ENCODE measurements at regions of chr1 and their contacts with region 1.

Region 1: DNA sequence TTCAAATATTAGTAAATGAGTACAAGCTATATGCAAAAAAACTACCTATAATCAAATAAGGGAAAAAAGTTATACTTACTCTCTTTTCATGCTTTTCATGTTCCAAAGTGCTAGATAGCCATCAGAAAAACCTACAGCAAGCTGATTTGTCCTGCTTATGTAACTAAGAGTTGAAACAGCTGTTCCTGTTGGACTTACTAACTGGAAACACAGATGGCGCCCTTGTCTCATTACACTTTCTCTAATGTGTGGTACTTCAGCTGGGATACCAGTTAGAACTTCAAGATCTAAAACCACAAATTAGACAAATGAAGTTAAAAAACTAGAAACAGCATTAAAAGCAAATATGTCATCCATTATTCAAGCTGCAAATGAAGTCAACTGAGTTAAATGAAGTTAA is 24.3 kb downstream of the AHCTF1 start:
- DNase-seq: peak; percentile 71 to 89 (median 85)
- H3K4me3 ChIP-seq: no peak overlapping the region
- H3K27ac ChIP-seq: no peak overlapping the region
- H3K4me1 ChIP-seq: no peaks in the 10 kb centered on the region
- H3K27me3 ChIP-seq: no peaks in the 10 kb centered on the region

Region 2: DNA sequence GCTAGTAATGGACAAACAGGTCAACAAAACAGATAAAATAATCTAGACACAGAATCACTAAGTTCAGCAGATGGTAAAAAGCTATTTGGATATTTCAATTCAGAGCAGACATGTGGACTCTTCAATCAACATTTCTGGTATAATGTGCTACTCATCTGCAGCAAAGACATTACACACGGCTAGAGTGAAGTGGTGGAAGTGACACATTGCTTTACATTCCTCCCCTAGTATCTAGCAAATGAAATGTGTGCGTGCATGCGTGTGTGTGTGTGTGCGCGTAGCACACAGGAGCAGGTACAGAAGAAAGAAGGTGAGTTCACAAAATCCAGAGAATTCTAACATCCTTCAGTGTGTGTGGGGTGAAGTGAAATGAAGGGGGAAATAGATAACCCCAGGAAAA is 16.0 kb after region 1 on chr1:
- CTCF ChIA-PET with region 1: interaction called, 17 read pairs
- POLR2A ChIA-PET with region 1: no interaction called
- DNase-seq: peak in 1 of 3 donors; percentile 12
- H3K4me3 ChIP-seq: no peak overlapping the region
- H3K27ac ChIP-seq: no peak overlapping the region
- H3K4me1 ChIP-seq: peaks cover 0 to 2% (median under 1%) of the 10 kb centered on the region in 4 experiments
- H3K27me3 ChIP-seq: no peaks in the 10 kb centered on the region

Region 3: GRCh38 chr1:247078261-247079140 is 171.0 kb after region 1 on chr1 and contains the start of gene ZNF670:
- CTCF ChIA-PET with region 1: interaction called, 15 read pairs
- POLR2A ChIA-PET with region 1: no interaction called
- DNase-seq: peak; percentile 93 to 96 (median 96)
- H3K4me3 ChIP-seq: peak within 1 kb of the TSS; percentile 65 to 99 (median 95)
- H3K27ac ChIP-seq: peak within 1 kb of the TSS; percentile 64 to 85
- H3K4me1 ChIP-seq: peaks cover 4 to 22% (median 14%) of the 10 kb centered on the region in 4 experiments
- H3K27me3 ChIP-seq: no peaks in the 10 kb centered on the region